ENCODE measurements at regions of chr1 and their contacts with region 1.

Region 1: DNA sequence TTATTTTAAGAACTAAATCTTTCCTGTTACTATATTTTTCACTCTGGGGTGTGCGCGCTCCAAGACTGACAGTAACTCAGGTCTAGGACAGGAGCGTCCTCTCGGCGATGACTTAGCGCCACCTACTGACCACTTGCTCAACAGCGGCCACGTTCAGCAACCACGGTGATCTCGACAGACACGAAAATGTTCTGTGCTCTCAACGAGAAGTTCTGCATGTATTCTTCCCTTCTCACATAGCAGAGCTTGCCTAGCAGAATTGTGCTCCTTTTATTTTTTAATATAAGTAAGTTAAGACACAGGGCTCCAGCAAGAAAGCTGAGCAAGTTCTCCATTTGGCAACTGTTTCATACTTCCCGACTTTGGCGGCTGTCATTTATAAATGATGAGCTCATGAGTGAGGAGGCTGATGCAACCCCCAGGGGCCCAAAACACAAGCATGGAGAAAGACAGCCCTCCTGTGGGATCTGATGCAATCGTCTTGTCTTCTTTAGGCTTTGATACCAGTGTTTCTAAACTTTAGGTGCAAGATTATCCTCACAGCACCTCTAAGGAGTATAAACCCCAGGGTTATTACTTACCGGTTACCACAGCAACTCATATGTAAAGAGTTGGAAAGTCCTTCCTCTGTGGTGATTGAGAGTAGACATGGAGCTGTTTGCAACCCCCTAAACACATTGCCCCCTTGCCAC is 92.6 kb downstream of the HHIPL2 start:
- DNase-seq: peak; percentile 83 to 89
- ATAC-seq: peak; percentile 93 to 98 (median 96)
- H3K4me3 ChIP-seq: peak overlapping the region; percentile 49
- H3K27ac ChIP-seq: peak overlapping the region; percentile 87
- H3K4me1 ChIP-seq: peaks cover 25% of the 10 kb centered on the region
- H3K27me3 ChIP-seq: no peaks in the 10 kb centered on the region
- CTCF ChIP-seq: peak; percentile 96

Region 2: DNA sequence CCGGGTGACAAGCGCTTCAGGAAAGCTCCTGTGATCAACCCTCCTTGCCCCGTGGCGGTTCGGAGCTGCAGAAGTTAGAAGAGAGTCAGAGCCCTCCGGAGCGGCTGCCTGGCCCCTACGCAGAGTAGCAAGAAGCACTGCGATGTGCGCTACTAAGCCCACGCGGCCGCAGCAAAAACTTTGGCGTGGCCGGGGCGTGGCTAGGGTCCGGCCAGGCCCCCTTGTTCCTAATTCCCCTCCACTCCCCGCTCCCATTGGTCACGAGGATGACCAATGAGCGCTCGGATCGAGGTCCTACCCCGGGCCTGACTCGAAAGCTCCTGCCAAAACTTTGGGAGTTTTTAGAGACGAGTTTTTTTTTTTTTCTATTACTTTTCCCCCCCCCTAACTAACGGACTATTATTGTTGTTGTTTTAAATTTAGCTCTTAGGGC is 1576.2 kb before region 1 on chr1 and contains the start of gene HLX:
- intact Hi-C with region 1: loop called in 1 of 2 experiments (anchors 10 kb)
- DNase-seq: peak; percentile 91 to 95
- ATAC-seq: peak; percentile 92 to 95 (median 94)
- H3K4me3 ChIP-seq: peak within 1 kb of the TSS; percentile 100
- H3K27ac ChIP-seq: peak within 1 kb of the TSS; percentile 90
- H3K4me1 ChIP-seq: peaks cover 13% of the 10 kb centered on the region
- H3K27me3 ChIP-seq: no peaks in the 10 kb centered on the region
- CTCF ChIP-seq: no peak
- total RNA-seq, gene HLX: 4.1 to 11.6 (median 7.3) TPM

Region 3: DNA sequence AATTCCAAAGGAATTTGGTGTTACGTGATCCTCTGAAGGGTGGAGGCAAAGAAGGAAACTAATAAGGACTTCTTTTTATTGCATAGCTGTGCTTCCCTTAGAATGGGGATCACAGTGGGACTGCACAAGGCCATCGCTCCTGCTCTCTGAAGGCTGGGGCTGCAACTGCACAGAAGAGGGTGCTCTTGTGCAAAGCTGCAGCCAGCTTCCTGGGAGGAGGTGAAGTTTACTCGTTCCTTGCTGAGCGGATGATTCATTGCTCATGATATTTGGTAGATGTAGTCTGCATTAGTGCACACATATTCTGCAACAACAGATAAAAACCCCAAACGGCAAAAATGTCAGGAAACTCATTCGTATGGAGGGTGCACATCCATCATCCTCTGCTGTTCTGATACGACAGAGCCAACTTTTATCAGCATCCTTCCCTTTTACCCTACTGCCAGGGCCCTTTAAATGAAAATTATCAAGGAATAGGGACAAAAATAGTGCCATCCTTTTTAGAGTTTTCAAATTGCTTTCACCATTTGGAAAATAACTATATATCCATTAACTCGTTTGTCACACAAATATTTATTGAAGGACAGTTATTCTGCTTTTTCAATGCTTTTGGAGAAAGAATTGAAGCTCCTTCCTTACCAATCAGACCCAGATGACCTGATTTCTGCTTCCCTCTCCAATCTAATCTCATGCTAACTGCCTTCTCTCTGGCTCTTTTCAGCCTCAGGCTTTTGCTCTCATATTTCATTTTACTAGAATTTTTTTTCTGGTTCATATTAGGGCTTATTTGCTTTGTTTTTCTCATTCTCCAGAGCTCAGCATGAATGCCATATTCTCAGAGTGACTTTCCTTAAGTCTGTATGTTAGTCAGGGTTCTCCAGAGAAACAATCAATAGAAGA is 977.0 kb before region 1 on chr1:
- intact Hi-C with region 1: loop called in 1 of 2 experiments (anchors 5 kb)
- DNase-seq: peak; percentile 30 to 71
- ATAC-seq: peak; percentile 75 to 93 (median 88)
- H3K4me3 ChIP-seq: no peak overlapping the region
- H3K27ac ChIP-seq: no peak overlapping the region
- H3K4me1 ChIP-seq: no peaks in the 10 kb centered on the region
- H3K27me3 ChIP-seq: peaks cover 0 to 3% (median 0%) of the 10 kb centered on the region in 3 donors
- CTCF ChIP-seq: peak; percentile 51

Region 4: DNA sequence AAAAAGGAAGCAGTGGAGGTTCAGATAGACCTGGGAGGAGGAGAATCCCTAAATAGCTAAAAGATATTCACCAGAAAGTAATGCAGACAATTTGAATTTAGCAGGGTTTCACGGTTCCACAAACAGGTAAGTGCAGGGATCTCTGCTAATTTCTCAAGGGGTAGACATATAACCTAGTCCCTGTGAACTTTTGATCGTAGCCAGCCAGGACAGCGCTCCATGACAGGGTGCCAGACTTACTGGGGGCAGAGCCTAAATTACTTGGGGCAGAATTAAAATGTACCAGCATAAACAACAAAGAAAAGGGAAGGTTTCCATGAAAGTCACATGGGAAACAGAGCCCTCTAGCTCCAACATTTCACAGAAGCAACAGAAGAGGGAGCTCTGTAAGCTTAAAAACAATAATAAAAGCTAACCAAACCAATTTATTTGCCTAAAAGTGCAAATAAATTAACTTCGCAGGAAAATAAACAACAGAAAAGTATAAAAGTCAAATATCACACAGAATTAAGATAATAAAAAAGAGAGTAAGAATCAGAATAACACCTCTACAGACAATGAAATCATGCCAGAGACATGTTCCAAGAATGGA is 911.7 kb before region 1 on chr1:
- intact Hi-C with region 1: loop called in 1 of 2 experiments (anchors 10 kb)
- DNase-seq: no peak
- ATAC-seq: peak in 3 of 4 donors; percentile 32 to 56 (median 55)
- H3K4me3 ChIP-seq: no peak overlapping the region
- H3K27ac ChIP-seq: no peak overlapping the region
- H3K4me1 ChIP-seq: no peaks in the 10 kb centered on the region
- H3K27me3 ChIP-seq: no peaks in the 10 kb centered on the region
- CTCF ChIP-seq: peak; percentile 60

Region 5: GRCh38 chr1:221994274-221994698 is 461.0 kb before region 1 on chr1:
- intact Hi-C with region 1: loop called in 1 of 2 experiments (anchors 10 kb)
- DNase-seq: no peak
- ATAC-seq: no peak
- H3K4me3 ChIP-seq: no peak overlapping the region
- H3K27ac ChIP-seq: no peak overlapping the region
- H3K4me1 ChIP-seq: no peaks in the 10 kb centered on the region
- H3K27me3 ChIP-seq: no peaks in the 10 kb centered on the region
- CTCF ChIP-seq: no peak

Region 6: GRCh38 chr1:222034790-222035189 is 420.5 kb before region 1 on chr1:
- intact Hi-C with region 1: loop called in 1 of 2 experiments (anchors 10 kb)
- DNase-seq: no peak
- ATAC-seq: no peak
- H3K4me3 ChIP-seq: no peak overlapping the region
- H3K27ac ChIP-seq: no peak overlapping the region
- H3K4me1 ChIP-seq: peaks cover 5% of the 10 kb centered on the region
- H3K27me3 ChIP-seq: no peaks in the 10 kb centered on the region
- CTCF ChIP-seq: no peak

Region 7: GRCh38 chr1:222095606-222096475 is 359.5 kb before region 1 on chr1:
- intact Hi-C with region 1: loop called in 1 of 2 experiments (anchors 5 kb)
- DNase-seq: no peak
- ATAC-seq: no peak
- H3K4me3 ChIP-seq: no peak overlapping the region
- H3K27ac ChIP-seq: no peak overlapping the region
- H3K4me1 ChIP-seq: no peaks in the 10 kb centered on the region
- H3K27me3 ChIP-seq: no peaks in the 10 kb centered on the region
- CTCF ChIP-seq: peak; percentile 56

Region 8: DNA sequence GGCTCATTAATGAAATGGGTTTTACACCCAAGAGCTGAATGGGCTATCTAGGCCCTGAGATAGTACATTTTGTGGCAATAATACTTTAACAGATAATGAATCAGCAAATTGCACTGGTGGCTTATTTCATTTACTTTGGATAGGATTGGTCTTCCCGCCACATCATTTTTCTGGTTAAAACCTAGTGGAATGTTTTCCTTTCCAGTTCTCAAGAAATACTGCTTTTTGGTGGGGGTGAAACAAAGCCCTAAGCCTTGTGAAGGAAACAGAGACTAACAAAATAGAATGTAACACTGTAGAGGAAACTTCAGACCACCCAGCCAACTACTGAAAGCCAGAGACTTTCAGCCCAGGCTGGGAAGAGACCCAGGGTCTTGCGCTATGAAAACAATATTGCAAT is 79.6 kb before region 1 on chr1:
- intact Hi-C with region 1: no loop called
- DNase-seq: no peak
- ATAC-seq: no peak
- H3K4me3 ChIP-seq: no peak overlapping the region
- H3K27ac ChIP-seq: no peak overlapping the region
- H3K4me1 ChIP-seq: no peaks in the 10 kb centered on the region
- H3K27me3 ChIP-seq: no peaks in the 10 kb centered on the region
- CTCF ChIP-seq: no peak